ENCODE measurements at regions of chr11 and their contacts with region 1.

Region 1: GRCh38 chr11:108008656-108009496 is at the start of gene CUL5:
- DNase-seq: peak; percentile 95
- ATAC-seq: peak; percentile 89
- H3K4me3 Mint-ChIP-seq: peak within 1 kb of the TSS; percentile 99
- H3K27ac Mint-ChIP-seq: peak within 1 kb of the TSS; percentile 95
- H3K4me1 Mint-ChIP-seq: peaks cover 16% of the 10 kb centered on the region
- H3K27me3 Mint-ChIP-seq: no peaks in the 10 kb centered on the region
- total RNA-seq, gene CUL5: 19.7 to 34.4 TPM

Region 2: GRCh38 chr11:107858217-107859070 is 150.4 kb before region 1 on chr11 and contains the start of gene SLC35F2:
- CTCF ChIA-PET with region 1: no interaction called
- POLR2A ChIA-PET with region 1: no interaction called
- intact Hi-C with region 1: loop called in 1 of 2 experiments (anchors 2 kb)
- DNase-seq: peak; percentile 86
- ATAC-seq: peak; percentile 88
- H3K4me3 Mint-ChIP-seq: peak within 1 kb of the TSS; percentile 92
- H3K27ac Mint-ChIP-seq: peak within 1 kb of the TSS; percentile 94
- H3K4me1 Mint-ChIP-seq: peaks cover 31% of the 10 kb centered on the region
- H3K27me3 Mint-ChIP-seq: no peaks in the 10 kb centered on the region
- total RNA-seq, gene SLC35F2: 24.5 to 25.5 TPM

Region 3: GRCh38 chr11:107957109-107957588 is 51.7 kb before region 1 on chr11:
- CTCF ChIA-PET with region 1: no interaction called
- POLR2A ChIA-PET with region 1: no interaction called
- intact Hi-C with region 1: no loop called
- DNase-seq: no peak
- ATAC-seq: no peak
- H3K4me3 Mint-ChIP-seq: no peak overlapping the region
- H3K27ac Mint-ChIP-seq: no peak overlapping the region
- H3K4me1 Mint-ChIP-seq: no peaks in the 10 kb centered on the region
- H3K27me3 Mint-ChIP-seq: peaks cover 17% of the 10 kb centered on the region

Region 4: DNA sequence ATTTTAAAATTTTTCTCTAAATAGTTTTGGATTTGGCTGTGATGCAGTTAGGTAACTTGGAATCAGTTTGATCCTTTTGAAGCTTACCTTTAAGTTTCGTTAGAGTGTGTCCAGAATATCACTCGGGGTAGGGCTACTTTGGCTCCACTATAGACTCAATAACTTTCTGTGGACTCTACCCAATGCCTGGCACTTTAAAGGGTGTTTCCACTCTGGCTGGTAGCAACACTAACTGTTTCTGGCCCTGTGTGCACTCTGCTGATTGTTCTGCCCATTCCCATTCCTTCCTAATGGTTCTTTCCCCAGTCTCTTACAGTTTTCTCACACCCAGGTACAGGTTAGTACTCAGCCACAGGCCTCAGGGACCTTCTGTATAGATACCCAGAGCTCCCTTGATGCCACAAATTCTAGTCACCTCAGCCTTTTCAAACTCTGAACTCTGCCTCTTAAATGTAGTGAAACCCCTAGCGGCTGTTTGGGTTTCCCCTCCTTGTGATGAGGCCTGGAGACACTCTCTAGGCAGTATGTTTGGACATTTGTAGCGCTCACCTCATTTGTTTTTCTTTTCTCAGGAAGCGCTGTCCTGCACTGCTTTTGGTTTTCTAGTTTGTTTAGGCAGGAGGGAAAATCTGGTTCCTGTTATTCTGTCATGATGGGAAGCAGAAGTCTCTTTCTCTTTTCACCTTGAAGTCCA is 16.7 kb after region 1 on chr11:
- CTCF ChIA-PET with region 1: interaction called, 32 read pairs
- POLR2A ChIA-PET with region 1: interaction called, 3 read pairs
- intact Hi-C with region 1: loop called in 1 of 2 experiments (anchors 1 kb)
- DNase-seq: peak; percentile 29
- ATAC-seq: peak; percentile 84
- H3K4me3 Mint-ChIP-seq: no peak overlapping the region
- H3K27ac Mint-ChIP-seq: peak overlapping the region; percentile 21
- H3K4me1 Mint-ChIP-seq: peaks cover 52% of the 10 kb centered on the region
- H3K27me3 Mint-ChIP-seq: no peaks in the 10 kb centered on the region

Region 5: GRCh38 chr11:108302121-108302785 is 293.4 kb after region 1 on chr11:
- CTCF ChIA-PET with region 1: no interaction called
- POLR2A ChIA-PET with region 1: no interaction called
- intact Hi-C with region 1: no loop called
- DNase-seq: no peak
- ATAC-seq: peak; percentile 94
- H3K4me3 Mint-ChIP-seq: no peak overlapping the region
- H3K27ac Mint-ChIP-seq: no peak overlapping the region
- H3K4me1 Mint-ChIP-seq: peaks cover 33% of the 10 kb centered on the region
- H3K27me3 Mint-ChIP-seq: no peaks in the 10 kb centered on the region

Region 6: DNA sequence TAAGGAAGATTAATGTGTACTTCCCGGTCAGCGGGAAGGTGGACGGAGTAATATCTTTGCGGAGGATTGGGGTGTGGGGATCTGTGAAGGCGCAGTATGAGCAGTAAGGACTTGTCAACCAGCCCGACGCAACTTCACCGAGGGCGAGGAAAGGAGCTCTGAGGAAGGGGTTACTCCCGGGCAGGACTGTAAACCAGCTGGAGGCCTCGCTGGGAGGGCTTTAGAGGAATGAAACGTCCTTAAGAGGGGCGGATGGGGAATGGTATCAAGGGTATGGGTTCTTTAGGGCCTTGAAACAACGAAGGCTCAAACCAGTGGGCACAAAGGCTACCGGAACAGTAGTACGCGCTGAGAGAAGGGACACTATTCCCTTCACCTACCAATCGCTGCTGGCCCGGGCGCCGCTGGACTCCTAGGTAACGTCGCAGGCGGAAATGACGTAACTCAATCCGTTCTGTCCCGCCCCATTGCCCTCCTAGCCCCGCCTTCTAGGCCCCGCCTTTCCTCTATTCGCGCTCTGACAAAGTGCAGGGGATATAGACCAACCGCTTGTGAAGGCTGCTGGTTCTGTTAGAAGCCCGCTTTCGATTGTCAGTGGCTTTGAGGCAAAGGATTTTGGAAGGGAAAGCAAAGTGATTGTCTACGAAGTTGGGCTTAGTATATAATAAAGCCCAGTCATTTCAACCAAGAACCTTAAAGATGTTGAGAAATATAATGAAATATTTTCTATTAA is 458.4 kb after region 1 on chr11 and contains the start of gene C11orf65:
- CTCF ChIA-PET with region 1: no interaction called
- POLR2A ChIA-PET with region 1: no interaction called
- intact Hi-C with region 1: loop called (anchors 1 to 10 kb)
- DNase-seq: peak; percentile 97
- ATAC-seq: peak; percentile 98
- H3K4me3 Mint-ChIP-seq: peak within 1 kb of the TSS; percentile 99
- H3K27ac Mint-ChIP-seq: peak within 1 kb of the TSS; percentile 98
- H3K4me1 Mint-ChIP-seq: peaks cover 12% of the 10 kb centered on the region
- H3K27me3 Mint-ChIP-seq: no peaks in the 10 kb centered on the region
- total RNA-seq, gene C11orf65: 3.4 to 3.6 TPM

Region 7: DNA sequence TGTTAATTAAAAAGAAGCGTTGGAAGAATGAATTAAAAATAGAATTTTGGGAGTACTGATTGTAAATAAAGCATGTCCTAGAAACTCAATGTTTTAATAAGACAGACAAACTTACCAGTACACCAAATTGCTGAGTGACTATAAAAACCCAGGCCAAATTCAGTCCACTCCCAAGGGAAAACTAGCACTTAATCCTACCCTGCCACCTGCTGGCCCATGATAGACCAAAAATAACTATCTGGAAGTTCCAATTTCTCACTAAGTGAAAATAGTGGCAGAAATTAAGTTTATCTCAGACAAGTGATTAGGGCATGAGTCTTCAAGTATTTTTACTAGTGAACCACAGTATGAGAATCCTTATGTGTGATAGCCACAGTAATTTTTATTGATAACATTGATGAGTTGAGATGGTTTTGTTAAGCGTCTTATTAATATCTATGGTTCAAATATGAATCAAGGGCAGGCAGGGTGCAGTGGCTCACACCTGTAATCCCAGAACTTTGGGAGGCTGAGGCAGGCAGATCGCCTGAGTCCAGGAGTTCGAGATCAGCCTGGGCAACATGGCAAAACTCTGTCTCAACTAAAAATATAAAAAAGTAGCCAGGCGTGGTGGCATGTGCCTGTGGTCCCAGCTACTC is 646.2 kb after region 1 on chr11:
- CTCF ChIA-PET with region 1: no interaction called
- POLR2A ChIA-PET with region 1: no interaction called
- intact Hi-C with region 1: loop called in 1 of 2 experiments (anchors 2 kb)
- DNase-seq: peak; percentile 60
- ATAC-seq: peak; percentile 39
- H3K4me3 Mint-ChIP-seq: no peak overlapping the region
- H3K27ac Mint-ChIP-seq: no peak overlapping the region
- H3K4me1 Mint-ChIP-seq: no peaks in the 10 kb centered on the region
- H3K27me3 Mint-ChIP-seq: peaks cover 3% of the 10 kb centered on the region